Gastrocnemius medialis (tissue), 4 donors: ENCODE measurements at regions of chr15 and their contacts with region 1.

Region 1: GRCh38 chr15:81106560-81106959 is 27.5 kb upstream of the CFAP161 start:
- DNase-seq: peak in 1 of 2 donors; percentile 20
- ATAC-seq: peak; percentile 78 to 79
- H3K4me3 ChIP-seq: no peak overlapping the region
- H3K27ac ChIP-seq: no peak overlapping the region
- H3K4me1 ChIP-seq: no peaks in the 10 kb centered on the region
- H3K27me3 ChIP-seq: no peaks in the 10 kb centered on the region
- CTCF ChIP-seq: peak; percentile 49 to 74 (median 71)
- POLR2A ChIP-seq: no peak

Region 2: GRCh38 chr15:81000624-81001151 is 105.9 kb before region 1 on chr15 and contains the start of gene TLNRD1:
- in situ Hi-C with region 1: loop called in 2 of 4 experiments (anchors 10 kb)
- intact Hi-C with region 1: loop called (anchors 5 kb)
- DNase-seq: peak; percentile 68 to 74
- ATAC-seq: peak; percentile 61 to 62
- H3K4me3 ChIP-seq: peak within 1 kb of the TSS; percentile 61 to 93 (median 74)
- H3K27ac ChIP-seq: peak within 1 kb of the TSS; percentile 70 to 87 (median 84)
- H3K4me1 ChIP-seq: peaks cover 0 to 10% of the 10 kb centered on the region in 2 donors
- H3K27me3 ChIP-seq: peaks cover 8 to 31% (median 12%) of the 10 kb centered on the region in 3 donors
- CTCF ChIP-seq: no peak
- POLR2A ChIP-seq: peak; percentile 68 to 82
- total RNA-seq, gene TLNRD1: 1.9 to 8.1 (median 3.3) TPM

Region 3: GRCh38 chr15:81155375-81156218 is 49.0 kb after region 1 on chr15:
- in situ Hi-C with region 1: no loop called
- intact Hi-C with region 1: loop called (anchors 5 kb)
- DNase-seq: peak; percentile 41 to 56
- ATAC-seq: peak; percentile 63 to 92
- H3K4me3 ChIP-seq: no peak overlapping the region
- H3K27ac ChIP-seq: no peak overlapping the region
- H3K4me1 ChIP-seq: peaks cover 0 to 4% of the 10 kb centered on the region in 2 donors
- H3K27me3 ChIP-seq: no peaks in the 10 kb centered on the region
- CTCF ChIP-seq: peak; percentile 28 to 49 (median 43)
- POLR2A ChIP-seq: no peak